Left ventricle myocardium superior (tissue), 1 donor: ENCODE measurements at regions of chr1 and their contacts with region 1.

Region 1: DNA sequence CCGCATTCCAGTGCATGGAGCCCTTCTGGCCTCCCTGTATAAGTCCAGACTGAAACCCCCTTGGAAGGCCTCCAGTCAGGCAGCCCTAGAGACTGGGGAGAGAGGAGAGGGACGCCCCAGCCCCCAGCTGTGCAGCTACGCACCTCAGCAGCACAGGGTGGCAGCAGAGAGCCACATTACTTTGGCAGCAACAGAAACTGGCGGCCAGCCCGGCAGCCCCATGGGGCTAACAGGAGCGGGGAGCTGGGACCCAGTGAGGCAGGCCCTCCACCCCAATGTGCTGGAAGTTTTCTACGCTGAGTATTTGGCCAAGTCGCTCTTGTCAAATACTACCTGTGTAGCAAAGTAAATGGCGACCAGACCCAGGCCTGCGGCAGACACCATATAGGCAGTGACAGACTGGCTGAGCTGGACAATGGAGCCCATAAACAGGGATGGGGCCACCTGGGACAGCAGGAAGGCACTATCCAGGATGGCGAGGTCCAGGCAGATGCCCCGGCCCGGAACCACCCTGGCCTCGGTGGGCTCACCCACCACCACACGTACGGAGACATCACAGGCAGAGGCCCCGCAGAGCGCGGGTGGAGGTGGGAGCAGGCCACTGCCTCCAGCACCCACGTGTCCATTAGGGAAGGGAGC is 21.2 kb downstream of the SLC45A3 start:
- DNase-seq: peak; percentile 92
- ATAC-seq: peak; percentile 88

Region 2: GRCh38 chr1:205493241-205494085 is 165.6 kb before region 1 on chr1:
- intact Hi-C with region 1: no loop called
- DNase-seq: peak; percentile 52
- ATAC-seq: peak; percentile 49

Region 3: GRCh38 chr1:205588636-205589035 is 70.4 kb before region 1 on chr1:
- intact Hi-C with region 1: no loop called
- DNase-seq: no peak
- ATAC-seq: no peak

Region 4: GRCh38 chr1:205711104-205712020 is 52.3 kb after region 1 on chr1:
- intact Hi-C with region 1: loop called (anchors 5 kb)
- DNase-seq: no peak
- ATAC-seq: peak; percentile 81